Activated CD4-positive, alpha-beta memory T cell treated with anti-CD3 and anti-CD28 coated beads for 36 hours (primary cell): ENCODE measurements at regions of chr3 and their contacts with region 1.

Region 1: DNA sequence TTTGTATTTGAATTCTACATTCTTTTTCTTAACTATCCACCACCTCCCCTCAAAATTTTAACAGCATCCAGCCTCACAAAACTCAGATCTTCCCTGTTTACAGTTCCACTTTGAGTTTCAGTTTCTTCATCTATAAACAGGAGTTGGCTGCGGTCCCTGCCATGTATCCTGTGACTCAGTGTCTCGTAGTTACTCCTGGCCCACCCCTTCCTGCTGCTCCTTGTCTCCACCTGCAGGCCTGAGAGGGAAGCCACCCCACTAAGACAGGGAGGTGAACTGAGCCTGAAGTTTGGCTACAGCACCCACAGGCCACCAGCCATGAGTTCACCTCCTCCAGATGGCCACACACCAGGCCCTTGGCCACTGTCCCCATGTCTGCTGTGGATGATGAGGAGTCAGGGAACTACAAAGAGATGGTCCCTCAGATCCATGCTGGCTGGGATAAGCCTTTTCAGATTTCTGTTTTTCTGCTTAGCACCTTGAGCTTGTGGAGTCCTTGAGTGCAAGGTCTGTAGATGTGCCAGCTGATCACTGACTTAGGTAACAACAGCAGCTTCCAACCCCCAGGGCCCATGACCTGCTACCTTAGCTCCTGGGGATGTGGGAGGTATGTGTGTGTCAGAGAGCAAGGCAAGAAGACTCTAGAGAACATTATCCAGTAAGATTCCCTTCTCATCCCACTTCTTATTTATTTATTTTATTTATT is 37.5 kb downstream of the CD86 start:
- DNase-seq: peak; percentile 86
- H3K4me3 Mint-ChIP-seq: no peak overlapping the region
- H3K27ac Mint-ChIP-seq: peak overlapping the region; percentile 59
- H3K4me1 Mint-ChIP-seq: peaks cover 34% of the 10 kb centered on the region
- H3K27me3 Mint-ChIP-seq: no peaks in the 10 kb centered on the region

Region 2: GRCh38 chr3:121624147-121624899 is 468.3 kb before region 1 on chr3:
- CTCF ChIA-PET with region 1: no interaction called
- POLR2A ChIA-PET with region 1: no interaction called
- intact Hi-C with region 1: no loop called
- DNase-seq: no peak
- H3K4me3 Mint-ChIP-seq: no peak overlapping the region
- H3K27ac Mint-ChIP-seq: no peak overlapping the region
- H3K4me1 Mint-ChIP-seq: no peaks in the 10 kb centered on the region
- H3K27me3 Mint-ChIP-seq: no peaks in the 10 kb centered on the region

Region 3: GRCh38 chr3:121834696-121835464 is 257.7 kb before region 1 on chr3 and contains the starts of genes EAF2 and IQCB1:
- CTCF ChIA-PET with region 1: interaction called, 3 read pairs
- POLR2A ChIA-PET with region 1: no interaction called
- intact Hi-C with region 1: loop called (anchors 1 kb)
- DNase-seq: peak; percentile 98
- H3K4me3 Mint-ChIP-seq: peak within 1 kb of the TSS; percentile 98
- H3K27ac Mint-ChIP-seq: peak within 1 kb of the TSS; percentile 84
- H3K4me1 Mint-ChIP-seq: peaks cover 37% of the 10 kb centered on the region
- H3K27me3 Mint-ChIP-seq: no peaks in the 10 kb centered on the region
- total RNA-seq, gene EAF2: 14.4 to 14.8 TPM
- total RNA-seq, gene IQCB1: 36.8 to 37.3 TPM

Region 4: GRCh38 chr3:121988146-121988545 is 104.5 kb before region 1 on chr3:
- CTCF ChIA-PET with region 1: no interaction called
- POLR2A ChIA-PET with region 1: no interaction called
- intact Hi-C with region 1: loop called (anchors 1 kb)
- DNase-seq: peak; percentile 46
- H3K4me3 Mint-ChIP-seq: no peak overlapping the region
- H3K27ac Mint-ChIP-seq: no peak overlapping the region
- H3K4me1 Mint-ChIP-seq: peaks cover 4% of the 10 kb centered on the region
- H3K27me3 Mint-ChIP-seq: peaks cover 5% of the 10 kb centered on the region

Region 5: DNA sequence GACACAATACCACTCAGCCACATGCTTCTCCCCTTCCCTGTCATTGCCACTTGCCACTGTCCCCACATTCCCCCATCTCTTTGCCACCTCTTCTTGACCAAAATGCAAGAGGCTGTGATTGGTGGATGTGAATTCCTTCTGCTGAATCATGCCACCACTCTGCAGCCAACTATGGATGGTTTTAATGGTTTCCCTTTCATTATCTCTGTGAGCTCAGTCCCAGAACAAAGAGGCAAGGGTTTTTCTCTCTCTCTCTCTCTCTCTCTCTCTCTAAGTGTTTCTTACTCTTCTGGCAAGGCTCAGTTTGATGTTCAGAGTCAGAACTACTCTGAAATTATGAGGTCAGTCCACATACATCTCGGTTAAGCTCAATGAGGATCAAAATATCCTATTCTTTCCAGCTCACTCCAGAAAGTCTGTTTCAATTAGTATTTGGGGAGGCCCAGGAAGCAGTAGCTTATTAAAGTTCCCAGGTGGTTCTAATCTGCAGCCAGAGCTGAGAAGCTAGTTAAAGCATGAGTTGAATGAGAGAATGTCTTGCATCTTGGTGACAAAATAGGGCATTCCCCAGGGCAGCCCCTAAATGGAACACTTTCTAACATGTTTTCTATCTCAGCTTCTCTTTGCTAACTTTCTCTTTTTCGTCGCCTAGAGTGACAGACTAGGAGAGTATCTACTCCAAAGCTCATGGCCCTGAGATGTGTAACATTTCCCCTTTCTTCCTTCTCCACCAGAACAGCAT is 62.1 kb before region 1 on chr3:
- CTCF ChIA-PET with region 1: no interaction called
- POLR2A ChIA-PET with region 1: no interaction called
- intact Hi-C with region 1: loop called (anchors 1 kb)
- DNase-seq: peak; percentile 40
- H3K4me3 Mint-ChIP-seq: no peak overlapping the region
- H3K27ac Mint-ChIP-seq: peak overlapping the region; percentile 46
- H3K4me1 Mint-ChIP-seq: peaks cover 13% of the 10 kb centered on the region
- H3K27me3 Mint-ChIP-seq: peaks cover 2% of the 10 kb centered on the region

Region 6: GRCh38 chr3:122081543-122082247 is 10.9 kb before region 1 on chr3:
- CTCF ChIA-PET with region 1: interaction called, 5 read pairs
- POLR2A ChIA-PET with region 1: interaction called, 3 read pairs
- intact Hi-C with region 1: loop called (anchors 1 kb)
- DNase-seq: no peak
- H3K4me3 Mint-ChIP-seq: no peak overlapping the region
- H3K27ac Mint-ChIP-seq: no peak overlapping the region
- H3K4me1 Mint-ChIP-seq: peaks cover 31% of the 10 kb centered on the region
- H3K27me3 Mint-ChIP-seq: peaks cover 10% of the 10 kb centered on the region

Region 7: GRCh38 chr3:122169908-122170307 is 77.3 kb after region 1 on chr3:
- CTCF ChIA-PET with region 1: no interaction called
- POLR2A ChIA-PET with region 1: no interaction called
- intact Hi-C with region 1: no loop called
- DNase-seq: no peak
- H3K4me3 Mint-ChIP-seq: no peak overlapping the region
- H3K27ac Mint-ChIP-seq: no peak overlapping the region
- H3K4me1 Mint-ChIP-seq: no peaks in the 10 kb centered on the region
- H3K27me3 Mint-ChIP-seq: peaks cover 13% of the 10 kb centered on the region